ENCODE measurements at regions of chr18 and their contacts with region 1.

Region 1: DNA sequence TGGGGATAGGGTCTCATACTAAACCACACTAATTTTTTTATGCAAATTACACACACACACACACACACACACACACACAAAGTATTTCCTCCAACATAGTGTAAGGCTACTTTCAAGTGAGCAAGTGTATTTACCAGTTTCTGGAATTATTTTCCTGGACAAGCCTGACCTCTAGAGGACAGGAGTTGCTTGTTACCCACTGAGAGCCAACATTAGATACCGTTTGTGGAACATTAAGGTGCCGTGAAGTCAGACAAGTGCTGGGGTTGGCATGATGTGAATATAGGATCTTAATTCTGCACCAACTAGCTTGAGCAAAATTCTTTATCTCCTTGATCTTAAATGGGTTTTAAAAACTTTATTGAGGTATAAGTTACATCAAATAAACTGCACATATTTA is 39.3 kb upstream of the SERPINB2 start:
- DNase-seq: peak; percentile 45
- H3K4me3 ChIP-seq: no peak overlapping the region
- CTCF ChIP-seq: peak; percentile 73

Region 2: GRCh38 chr18:63518178-63519012 is 329.8 kb before region 1 on chr18:
- in situ Hi-C with region 1: loop called (anchors 25 kb)
- DNase-seq: peak; percentile 71
- H3K4me3 ChIP-seq: no peak overlapping the region
- CTCF ChIP-seq: peak; percentile 60